ENCODE measurements at regions of chr15 and their contacts with region 1.

Region 1: DNA sequence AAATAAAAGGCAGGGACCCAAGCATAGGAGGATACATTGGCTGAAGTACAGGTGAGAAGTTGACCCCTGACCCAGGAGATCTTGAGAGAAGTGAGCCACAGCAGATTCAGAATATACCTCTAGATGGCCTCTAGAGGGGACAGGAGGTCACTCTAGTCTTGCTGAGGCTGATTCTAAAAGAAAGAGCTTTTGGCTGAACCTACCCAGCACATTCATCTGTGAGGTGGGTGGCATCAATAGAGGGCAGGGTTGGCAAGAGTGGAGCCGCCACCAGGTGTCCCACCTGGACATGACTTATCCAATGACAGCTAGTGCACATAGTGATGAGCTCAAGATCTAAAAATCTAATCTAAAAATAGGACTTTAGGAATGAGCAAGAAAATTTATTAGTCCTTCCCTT is 51.6 kb downstream of the CYP19A1 start:
- DNase-seq: no peak
- ATAC-seq: peak in 3 of 4 donors; percentile 41 to 68 (median 51)
- H3K4me3 ChIP-seq: no peak overlapping the region
- H3K27ac ChIP-seq: no peak overlapping the region
- H3K4me1 ChIP-seq: peaks cover 0 to 17% (median 0%) of the 10 kb centered on the region in 12 donors
- H3K27me3 ChIP-seq: no peaks in the 10 kb centered on the region
- CTCF ChIP-seq: peak in 10 of 12 donors; percentile 11 to 45 (median 32)
- POLR2A ChIP-seq: no peak

Region 2: GRCh38 chr15:50820808-50821382 is 465.9 kb before region 1 on chr15:
- intact Hi-C with region 1: no loop called
- DNase-seq: no peak
- ATAC-seq: no peak
- H3K4me3 ChIP-seq: no peak overlapping the region
- H3K27ac ChIP-seq: no peak overlapping the region
- H3K4me1 ChIP-seq: no peaks in the 10 kb centered on the region
- H3K27me3 ChIP-seq: no peaks in the 10 kb centered on the region
- CTCF ChIP-seq: no peak
- POLR2A ChIP-seq: no peak

Region 3: GRCh38 chr15:51332206-51333124 is 45.7 kb after region 1 on chr15:
- intact Hi-C with region 1: loop called in 1 of 10 experiments (anchors 5 kb)
- DNase-seq: no peak
- ATAC-seq: peak in 2 of 4 donors; percentile 40 to 60
- H3K4me3 ChIP-seq: no peak overlapping the region
- H3K27ac ChIP-seq: peak overlapping the region in 2 of 12 donors; percentile 5 to 19
- H3K4me1 ChIP-seq: peaks cover 0 to 66% (median 34%) of the 10 kb centered on the region in 12 donors
- H3K27me3 ChIP-seq: no peaks in the 10 kb centered on the region
- CTCF ChIP-seq: no peak
- POLR2A ChIP-seq: no peak